ENCODE measurements at regions of chr14 and their contacts with region 1.

Region 1: GRCh38 chr14:31207755-31208545 is at the start of gene HECTD1:
- DNase-seq: peak; percentile 85
- H3K4me3 Mint-ChIP-seq: peak within 1 kb of the TSS; percentile 86
- H3K27ac Mint-ChIP-seq: peak within 1 kb of the TSS; percentile 100
- H3K4me1 Mint-ChIP-seq: peaks cover 29% of the 10 kb centered on the region
- H3K27me3 Mint-ChIP-seq: peaks cover 2% of the 10 kb centered on the region
- total RNA-seq, gene HECTD1: 109 and 114 TPM in 2 replicates

Region 2: DNA sequence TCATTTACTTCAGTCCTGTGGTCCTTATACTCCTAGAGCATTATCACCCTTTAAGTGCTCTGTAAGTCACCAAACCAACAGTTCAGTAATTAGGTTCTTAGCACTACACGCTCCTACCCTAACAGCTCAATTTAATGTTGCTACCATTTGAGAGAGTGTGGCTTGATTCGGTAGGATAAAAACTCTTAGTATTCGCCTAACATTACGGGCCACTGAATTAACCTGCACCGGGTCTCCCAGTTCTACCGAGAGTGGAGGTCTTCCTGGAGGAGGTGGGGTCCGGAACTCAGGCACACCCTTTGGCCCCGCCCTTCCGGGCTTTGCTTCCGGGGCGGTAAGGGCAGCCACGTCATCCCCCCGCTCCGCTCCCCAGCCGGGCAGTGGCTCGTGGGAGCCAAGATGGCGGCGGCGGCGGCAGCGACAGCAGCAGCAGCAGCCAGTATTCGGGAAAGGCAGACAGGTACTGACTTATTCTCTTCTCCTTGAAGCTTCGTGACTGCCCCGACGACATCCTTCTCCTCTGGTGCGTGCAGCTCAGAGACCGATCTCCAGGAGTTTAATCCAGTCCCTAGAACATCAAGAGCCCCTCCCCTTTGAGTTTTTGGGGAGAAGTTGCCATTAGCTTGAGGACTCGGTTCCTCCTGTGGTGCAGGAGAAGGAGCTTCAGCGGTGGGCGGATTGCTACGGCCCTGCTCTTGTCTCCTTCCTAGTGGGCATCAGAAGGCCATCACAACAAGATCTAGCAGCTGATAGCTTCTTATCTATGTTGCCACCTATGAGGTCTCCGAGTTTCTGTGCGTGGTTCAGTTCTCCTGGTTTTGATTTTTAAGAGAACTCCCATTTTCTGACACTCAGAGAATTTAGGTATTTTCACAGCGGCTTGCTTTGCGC is 585.8 kb before region 1 on chr14 and contains the start of gene SCFD1:
- intact Hi-C with region 1: loop called (anchors 2 kb)
- DNase-seq: peak; percentile 93
- H3K4me3 Mint-ChIP-seq: peak within 1 kb of the TSS; percentile 95
- H3K27ac Mint-ChIP-seq: peak within 1 kb of the TSS; percentile 94
- H3K4me1 Mint-ChIP-seq: peaks cover 29% of the 10 kb centered on the region
- H3K27me3 Mint-ChIP-seq: no peaks in the 10 kb centered on the region
- total RNA-seq, gene SCFD1: 72.8 and 76.1 TPM in 2 replicates

Region 3: DNA sequence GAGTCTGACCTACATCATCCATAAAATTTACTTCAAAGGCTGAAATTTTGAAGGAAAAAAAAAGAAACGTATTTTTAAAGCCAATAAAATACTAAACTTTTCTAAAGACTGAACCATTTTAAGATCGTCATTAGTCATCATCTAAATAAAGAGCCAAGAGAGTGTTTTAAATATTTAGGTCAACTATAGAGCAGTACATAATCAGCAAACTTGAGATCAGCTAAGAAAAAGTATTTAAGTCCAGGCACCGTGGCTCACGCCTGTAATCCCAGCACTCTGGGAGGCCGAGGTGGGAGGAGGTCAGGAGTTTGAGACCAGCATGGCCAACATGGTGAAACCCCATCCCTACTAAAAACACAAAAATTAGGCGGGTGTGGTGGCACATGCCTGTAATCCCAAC is 35.9 kb before region 1 on chr14:
- intact Hi-C with region 1: no loop called
- DNase-seq: no peak
- H3K4me3 Mint-ChIP-seq: no peak overlapping the region
- H3K27ac Mint-ChIP-seq: no peak overlapping the region
- H3K4me1 Mint-ChIP-seq: no peaks in the 10 kb centered on the region
- H3K27me3 Mint-ChIP-seq: no peaks in the 10 kb centered on the region

Region 4: DNA sequence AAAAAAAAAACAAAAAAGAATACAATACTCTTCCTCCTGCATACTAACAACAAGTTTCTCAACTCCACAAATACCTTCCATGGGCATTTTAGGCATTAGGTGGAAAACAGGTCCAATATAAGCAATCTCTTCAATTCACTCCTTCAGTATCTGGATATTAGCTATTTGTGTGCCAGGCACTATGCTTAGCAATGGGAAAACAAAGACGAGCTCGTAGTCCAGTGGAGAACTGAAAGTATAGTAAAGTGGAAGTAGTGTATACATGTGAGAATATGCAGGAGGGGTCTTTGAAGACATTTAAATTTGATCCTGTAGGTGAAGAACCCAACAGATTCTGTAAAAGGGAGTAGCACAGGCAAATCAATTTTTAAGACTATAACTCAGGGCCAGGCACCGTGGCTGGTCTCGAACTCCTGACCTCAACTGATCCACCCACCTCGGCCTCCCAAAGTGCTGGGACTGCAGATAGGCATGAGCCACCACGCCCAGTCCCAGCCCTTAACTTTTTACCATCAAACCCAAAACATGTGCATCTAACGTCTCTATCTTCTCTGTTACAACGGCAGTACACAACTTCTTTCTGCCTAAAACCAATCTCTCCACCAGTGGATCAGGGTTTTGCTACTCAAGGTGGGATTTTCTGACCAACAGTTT is 11.0 kb before region 1 on chr14:
- intact Hi-C with region 1: loop called (anchors 1 kb)
- DNase-seq: no peak
- H3K4me3 Mint-ChIP-seq: no peak overlapping the region
- H3K27ac Mint-ChIP-seq: peak overlapping the region; percentile 40
- H3K4me1 Mint-ChIP-seq: peaks cover 34% of the 10 kb centered on the region
- H3K27me3 Mint-ChIP-seq: no peaks in the 10 kb centered on the region

Region 5: GRCh38 chr14:31229638-31230229 is 21.8 kb after region 1 on chr14:
- intact Hi-C with region 1: no loop called
- DNase-seq: no peak
- H3K4me3 Mint-ChIP-seq: no peak overlapping the region
- H3K27ac Mint-ChIP-seq: no peak overlapping the region
- H3K4me1 Mint-ChIP-seq: no peaks in the 10 kb centered on the region
- H3K27me3 Mint-ChIP-seq: peaks cover 4% of the 10 kb centered on the region

Region 6: DNA sequence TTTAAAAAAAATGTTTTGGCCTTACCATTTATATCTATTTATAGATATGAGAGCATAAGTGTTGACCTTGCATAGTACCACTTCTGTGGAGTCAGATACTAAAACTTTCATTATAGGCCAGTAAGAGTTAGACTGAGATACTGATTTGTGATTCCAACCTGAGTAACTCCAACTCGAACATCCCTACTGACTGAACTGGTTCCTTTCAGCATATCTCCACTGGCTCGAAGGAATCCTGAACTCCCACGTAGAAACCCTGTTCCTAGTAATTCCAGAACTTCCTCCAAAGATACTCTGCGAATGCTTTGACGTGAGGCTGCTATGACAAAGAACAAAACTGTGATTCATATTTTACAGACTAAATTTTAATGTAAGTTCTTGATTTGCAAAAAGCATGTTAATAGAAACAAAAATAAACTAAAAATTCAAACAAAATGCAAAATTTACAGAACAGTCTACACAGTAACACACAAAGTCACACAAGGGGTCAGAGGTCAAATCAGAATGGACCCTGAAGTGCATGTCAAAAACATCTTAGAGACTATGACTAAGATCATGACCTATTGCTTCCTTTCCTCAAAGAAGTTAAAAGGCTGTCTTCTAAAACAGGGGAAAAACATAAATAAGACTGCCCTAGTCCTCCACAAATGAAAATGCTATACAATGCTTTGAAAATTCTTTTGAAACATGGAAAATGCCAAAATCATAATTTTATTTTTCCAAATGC is 180.9 kb after region 1 on chr14:
- intact Hi-C with region 1: loop called (anchors 2 kb)
- DNase-seq: no peak
- H3K4me3 Mint-ChIP-seq: no peak overlapping the region
- H3K27ac Mint-ChIP-seq: peak overlapping the region; percentile 73
- H3K4me1 Mint-ChIP-seq: peaks cover 30% of the 10 kb centered on the region
- H3K27me3 Mint-ChIP-seq: no peaks in the 10 kb centered on the region

Region 7: DNA sequence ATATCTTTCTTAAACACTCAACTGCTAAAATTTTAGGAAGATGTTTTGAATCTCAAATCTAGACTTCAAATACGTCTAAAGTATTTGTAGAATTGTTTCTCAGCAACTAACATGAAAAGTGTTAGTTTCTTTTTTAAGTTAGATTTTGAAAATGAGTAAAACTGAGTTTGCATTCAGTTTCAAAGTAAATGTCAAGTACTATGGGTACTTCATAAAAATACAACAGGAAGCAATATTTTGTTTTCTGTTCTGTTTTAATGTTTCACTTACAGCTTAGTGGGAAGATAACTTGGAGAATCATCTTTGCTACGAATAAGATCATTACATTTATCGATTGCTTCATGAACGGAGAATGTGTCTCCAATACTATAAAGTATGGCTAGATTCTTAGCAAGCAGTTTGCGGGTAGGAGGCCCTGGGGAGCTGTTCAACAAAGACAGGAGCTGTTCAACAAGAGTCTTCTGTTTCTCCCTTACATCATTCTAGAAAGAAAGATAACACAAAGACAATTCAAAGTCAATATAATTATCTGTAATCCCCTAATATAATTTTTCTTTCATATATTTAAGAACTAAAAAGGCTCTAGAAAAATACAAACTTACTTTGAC is 192.2 kb after region 1 on chr14:
- intact Hi-C with region 1: no loop called
- DNase-seq: no peak
- H3K4me3 Mint-ChIP-seq: no peak overlapping the region
- H3K27ac Mint-ChIP-seq: peak overlapping the region; percentile 75
- H3K4me1 Mint-ChIP-seq: peaks cover 25% of the 10 kb centered on the region
- H3K27me3 Mint-ChIP-seq: no peaks in the 10 kb centered on the region

Region 8: GRCh38 chr14:31456841-31457664 is 249.1 kb after region 1 on chr14 and contains the start of gene DTD2:
- intact Hi-C with region 1: loop called (anchors 2 kb)
- DNase-seq: peak; percentile 86
- H3K4me3 Mint-ChIP-seq: peak within 1 kb of the TSS; percentile 98
- H3K27ac Mint-ChIP-seq: peak within 1 kb of the TSS; percentile 97
- H3K4me1 Mint-ChIP-seq: peaks cover 24% of the 10 kb centered on the region
- H3K27me3 Mint-ChIP-seq: peaks cover 1% of the 10 kb centered on the region
- total RNA-seq, gene DTD2: 26.7 and 26.9 TPM in 2 replicates

Region 9: DNA sequence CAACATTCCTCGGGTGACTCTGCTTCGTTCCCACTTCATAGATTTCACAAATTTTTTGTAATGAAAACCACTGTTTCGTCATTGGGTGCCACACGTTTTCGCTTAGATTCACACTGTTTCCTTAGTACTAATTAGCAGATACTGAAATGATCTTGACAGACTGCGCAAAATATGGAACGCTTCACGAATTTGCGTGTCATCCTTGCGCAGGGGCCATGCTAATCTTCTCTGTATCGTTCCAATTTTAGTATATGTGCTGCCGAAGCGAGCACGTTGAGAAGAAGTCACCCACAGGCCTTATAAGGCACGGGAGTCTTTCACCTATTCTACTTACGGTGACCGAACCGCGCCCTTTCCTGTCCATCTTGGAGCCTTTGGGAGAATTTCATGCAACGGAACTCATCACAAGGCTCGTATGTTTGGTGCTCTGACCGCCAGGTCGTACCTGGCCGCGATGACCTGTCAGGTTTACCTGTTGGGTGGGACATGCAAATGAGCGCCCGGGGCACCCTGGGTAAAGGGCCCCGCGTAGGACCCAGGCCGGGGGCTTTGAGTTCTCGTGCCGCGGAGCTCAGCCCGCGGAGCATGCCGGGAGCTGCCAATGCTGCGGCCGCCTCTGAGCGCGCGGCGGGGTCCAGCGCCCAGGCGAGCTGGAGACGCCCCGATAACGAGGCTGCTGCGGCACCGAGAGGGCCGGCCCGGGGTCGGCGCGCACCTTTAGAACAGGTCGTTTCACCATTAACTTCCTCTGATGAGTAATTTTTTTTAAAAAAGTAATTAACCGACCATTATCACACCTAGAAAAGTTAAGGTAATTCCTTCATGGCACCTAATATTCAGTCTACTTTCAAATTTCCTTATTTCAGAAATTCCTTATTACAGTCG is 995.3 kb after region 1 on chr14 and contains the start of gene RNU6-8:
- intact Hi-C with region 1: loop called (anchors 5 kb)
- DNase-seq: peak; percentile 80
- H3K4me3 Mint-ChIP-seq: peak within 1 kb of the TSS; percentile 88
- H3K27ac Mint-ChIP-seq: peak within 1 kb of the TSS; percentile 97
- H3K4me1 Mint-ChIP-seq: peaks cover 39% of the 10 kb centered on the region
- H3K27me3 Mint-ChIP-seq: peaks cover 22% of the 10 kb centered on the region
- total RNA-seq, gene RNU6-8: not detected in 2 replicates

Measured in activated T-helper 2 cell treated with anti-CD3 and anti-CD28 coated beads, Interferon-gamma antibody, Interleukin-2, Interleukin-4, amounts not matched to agents 10 μg/mL and 5 μg/mL and 100 μg/mL, durations not matched to agents 14 hours and 24 hours and 36 hours (primary cell).